ENCODE measurements at regions of chr3 and their contacts with region 1.

Region 1: DNA sequence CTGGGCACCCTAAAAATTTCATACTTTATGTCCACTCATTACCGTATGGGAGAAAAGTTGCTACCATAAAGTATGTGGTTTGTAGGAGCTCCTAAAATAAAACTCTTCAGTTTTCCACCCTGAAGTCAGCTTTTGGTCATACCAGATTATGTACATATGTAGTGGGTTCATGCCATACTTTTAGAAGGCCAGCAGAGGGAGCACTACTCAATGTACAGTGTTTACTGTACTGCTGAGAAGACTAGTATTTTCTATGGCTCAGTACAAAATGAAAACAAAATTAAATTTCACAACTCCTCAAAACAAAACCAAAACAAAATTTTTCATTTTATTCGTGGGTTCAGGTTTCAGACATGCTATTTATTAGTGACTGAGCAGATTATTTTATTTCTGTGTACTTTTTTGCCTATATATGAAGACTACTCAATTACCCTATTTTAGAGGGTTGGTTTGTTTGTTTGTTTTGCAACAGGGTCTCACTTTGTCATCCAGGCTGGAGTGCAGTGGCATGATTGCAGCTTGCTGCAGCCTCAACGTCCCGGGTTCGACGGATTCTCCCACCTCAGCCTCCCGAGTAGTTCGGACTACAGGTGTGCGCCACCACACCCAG is 24.3 kb downstream of the NXPE3 start:
- DNase-seq: peak; percentile 64 to 77 (median 71)
- H3K4me3 ChIP-seq: no peak overlapping the region
- H3K4me3 Mint-ChIP-seq: peak overlapping the region in 4 of 8 donors; percentile 8 to 66 (median 32)
- H3K27ac ChIP-seq: peak overlapping the region; percentile 18
- H3K27ac Mint-ChIP-seq: peak overlapping the region; percentile 56 to 85 (median 66)
- H3K4me1 ChIP-seq: peaks cover 13% of the 10 kb centered on the region
- H3K4me1 Mint-ChIP-seq: peaks cover 14 to 36% (median 20%) of the 10 kb centered on the region in 4 donors
- H3K27me3 ChIP-seq: no peaks in the 10 kb centered on the region
- H3K27me3 Mint-ChIP-seq: no peaks in the 10 kb centered on the region

Region 2: GRCh38 chr3:101695779-101696372 is 107.4 kb before region 1 on chr3:
- CTCF ChIA-PET with region 1: interaction called, 12 read pairs
- POLR2A ChIA-PET with region 1: no interaction called
- intact Hi-C with region 1: loop called (anchors 1 kb)
- DNase-seq: peak; percentile 51 to 67 (median 58)
- H3K4me3 ChIP-seq: no peak overlapping the region
- H3K4me3 Mint-ChIP-seq: no peak overlapping the region
- H3K27ac ChIP-seq: no peak overlapping the region
- H3K27ac Mint-ChIP-seq: peak overlapping the region in 2 of 7 donors; percentile 74 to 77
- H3K4me1 ChIP-seq: peaks cover 3% of the 10 kb centered on the region
- H3K4me1 Mint-ChIP-seq: peaks cover 0 to 2% (median 1%) of the 10 kb centered on the region in 4 donors
- H3K27me3 ChIP-seq: no peaks in the 10 kb centered on the region
- H3K27me3 Mint-ChIP-seq: no peaks in the 10 kb centered on the region

Region 3: DNA sequence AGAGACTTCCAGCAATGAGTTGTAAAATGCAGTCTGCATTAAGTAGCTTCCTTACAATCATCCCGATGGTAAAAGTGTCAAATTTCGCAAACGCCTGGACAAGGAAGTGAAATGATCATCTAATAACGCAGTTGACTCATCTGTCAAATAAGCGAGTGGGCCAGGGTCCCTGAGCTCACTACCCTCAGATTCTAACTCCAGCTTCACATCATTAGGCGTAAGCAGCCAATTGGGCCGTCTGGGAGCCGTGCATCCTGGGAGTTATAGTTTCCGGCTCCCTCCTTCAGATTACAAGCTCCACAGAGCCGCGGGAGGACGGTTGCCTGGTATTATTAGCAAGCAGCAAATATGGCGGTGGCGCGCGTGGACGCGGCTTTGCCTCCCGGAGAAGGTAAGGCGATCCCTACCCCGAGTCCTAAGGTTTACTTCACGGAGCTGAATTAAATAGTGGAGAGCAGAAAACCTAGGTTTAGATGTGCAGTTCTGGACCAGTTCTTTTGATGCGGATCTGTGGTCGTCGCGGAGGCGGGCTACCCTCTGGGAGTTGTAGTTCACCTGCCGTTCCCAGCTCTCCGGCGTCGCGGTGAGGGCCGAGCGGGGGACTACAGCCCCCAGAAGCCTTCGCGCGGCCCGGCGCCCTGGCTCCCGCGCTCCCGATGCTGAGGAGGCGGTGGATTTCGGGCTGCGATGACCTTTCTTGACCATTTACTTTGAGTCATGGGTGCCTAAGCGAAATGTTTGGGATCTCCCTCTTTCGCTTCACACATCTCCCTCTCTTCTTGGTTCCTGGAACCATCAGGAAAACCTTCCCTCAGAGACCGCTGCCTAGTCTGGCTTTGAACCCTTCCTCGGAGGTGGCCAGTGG is 78.7 kb before region 1 on chr3 and contains the start of gene CEP97:
- CTCF ChIA-PET with region 1: interaction called, 15 read pairs
- POLR2A ChIA-PET with region 1: no interaction called
- intact Hi-C with region 1: no loop called
- DNase-seq: peak; percentile 87 to 92 (median 90)
- H3K4me3 ChIP-seq: peak within 1 kb of the TSS; percentile 97 to 99
- H3K4me3 Mint-ChIP-seq: peak within 1 kb of the TSS; percentile 98 to 100 (median 99)
- H3K27ac ChIP-seq: peak within 1 kb of the TSS; percentile 90
- H3K27ac Mint-ChIP-seq: peak within 1 kb of the TSS; percentile 92 to 99 (median 99)
- H3K4me1 ChIP-seq: peaks cover 52% of the 10 kb centered on the region
- H3K4me1 Mint-ChIP-seq: peaks cover 31 to 56% (median 37%) of the 10 kb centered on the region in 4 donors
- H3K27me3 ChIP-seq: no peaks in the 10 kb centered on the region
- H3K27me3 Mint-ChIP-seq: no peaks in the 10 kb centered on the region
- total RNA-seq, gene CEP97: 14.8 to 16.8 TPM

Region 4: GRCh38 chr3:101791778-101792177 is 11.5 kb before region 1 on chr3:
- CTCF ChIA-PET with region 1: interaction called, 122 read pairs
- POLR2A ChIA-PET with region 1: interaction called, 3 read pairs
- intact Hi-C with region 1: no loop called
- DNase-seq: no peak
- H3K4me3 ChIP-seq: no peak overlapping the region
- H3K4me3 Mint-ChIP-seq: peak overlapping the region in 2 of 8 donors; percentile 10 to 55
- H3K27ac ChIP-seq: no peak overlapping the region
- H3K27ac Mint-ChIP-seq: peak overlapping the region in 4 of 7 donors; percentile 18 to 75 (median 48)
- H3K4me1 ChIP-seq: peaks cover 57% of the 10 kb centered on the region
- H3K4me1 Mint-ChIP-seq: peaks cover 47 to 78% (median 58%) of the 10 kb centered on the region in 4 donors
- H3K27me3 ChIP-seq: no peaks in the 10 kb centered on the region
- H3K27me3 Mint-ChIP-seq: no peaks in the 10 kb centered on the region

Region 5: GRCh38 chr3:101819758-101820157 is 16.5 kb after region 1 on chr3:
- CTCF ChIA-PET with region 1: interaction called, 29 read pairs
- POLR2A ChIA-PET with region 1: no interaction called
- intact Hi-C with region 1: no loop called
- DNase-seq: no peak
- H3K4me3 ChIP-seq: no peak overlapping the region
- H3K4me3 Mint-ChIP-seq: no peak overlapping the region
- H3K27ac ChIP-seq: no peak overlapping the region
- H3K27ac Mint-ChIP-seq: peak overlapping the region in 2 of 7 donors; percentile 41 to 74
- H3K4me1 ChIP-seq: peaks cover 2% of the 10 kb centered on the region
- H3K4me1 Mint-ChIP-seq: peaks cover 7 to 16% (median 12%) of the 10 kb centered on the region in 4 donors
- H3K27me3 ChIP-seq: no peaks in the 10 kb centered on the region
- H3K27me3 Mint-ChIP-seq: no peaks in the 10 kb centered on the region

Region 6: GRCh38 chr3:101950510-101950909 is 147.2 kb after region 1 on chr3:
- CTCF ChIA-PET with region 1: no interaction called
- POLR2A ChIA-PET with region 1: no interaction called
- intact Hi-C with region 1: no loop called
- DNase-seq: no peak
- H3K4me3 ChIP-seq: no peak overlapping the region
- H3K4me3 Mint-ChIP-seq: no peak overlapping the region
- H3K27ac ChIP-seq: no peak overlapping the region
- H3K27ac Mint-ChIP-seq: no peak overlapping the region
- H3K4me1 ChIP-seq: no peaks in the 10 kb centered on the region
- H3K4me1 Mint-ChIP-seq: peaks cover 0 to 11% (median 6%) of the 10 kb centered on the region in 4 donors
- H3K27me3 ChIP-seq: no peaks in the 10 kb centered on the region
- H3K27me3 Mint-ChIP-seq: no peaks in the 10 kb centered on the region

Region 7: GRCh38 chr3:102536456-102536855 is 733.2 kb after region 1 on chr3:
- CTCF ChIA-PET with region 1: interaction called, 17 read pairs
- POLR2A ChIA-PET with region 1: no interaction called
- intact Hi-C with region 1: loop called (anchors 1 kb)
- DNase-seq: peak in 4 of 5 donors; percentile 15 to 22 (median 18)
- H3K4me3 ChIP-seq: no peak overlapping the region
- H3K4me3 Mint-ChIP-seq: no peak overlapping the region
- H3K27ac ChIP-seq: no peak overlapping the region
- H3K27ac Mint-ChIP-seq: no peak overlapping the region
- H3K4me1 ChIP-seq: peaks cover 6% of the 10 kb centered on the region
- H3K4me1 Mint-ChIP-seq: peaks cover 0 to 8% (median 7%) of the 10 kb centered on the region in 4 donors
- H3K27me3 ChIP-seq: no peaks in the 10 kb centered on the region
- H3K27me3 Mint-ChIP-seq: peaks cover 3 to 6% of the 10 kb centered on the region in 2 donors